Head of caudate nucleus (tissue), 42 donors: ENCODE measurements at regions of chr7 and their contacts with region 1.

Region 1: DNA sequence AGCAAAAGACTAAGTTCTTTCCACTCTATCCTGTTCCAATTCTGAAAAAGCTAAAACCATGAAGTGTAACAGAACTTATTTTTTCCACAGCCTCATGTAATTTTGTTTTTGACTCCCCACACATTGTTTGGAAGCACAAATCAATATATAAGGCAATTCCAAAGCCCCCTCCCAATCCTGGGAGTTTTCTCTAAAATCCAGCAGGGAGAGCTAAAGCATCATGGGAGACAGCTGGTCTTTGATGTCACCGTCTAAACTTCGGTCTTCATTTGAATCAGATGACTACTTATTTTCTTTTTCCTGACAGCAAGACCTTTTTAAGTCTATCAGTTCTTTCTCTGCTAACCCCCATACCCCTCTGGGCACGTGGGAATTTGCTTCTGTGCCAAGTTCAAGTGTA is 33.3 kb upstream of the PON1 start:
- DNase-seq: peak in 6 of 42 donors; percentile 1 to 50 (median 10)

Region 2: GRCh38 chr7:95476904-95477594 is 119.4 kb after region 1 on chr7:
- intact Hi-C with region 1: loop called (anchors 5 kb)
- DNase-seq: peak; percentile 30 to 90 (median 75)